Natural killer cell (primary cell): ENCODE measurements at regions of chr2 and their contacts with region 1.

Region 1: GRCh38 chr2:224650815-224651439 is 65.2 kb downstream of the CCDC195 start:
- DNase-seq: peak in 1 of 2 donors; percentile 75
- ATAC-seq: peak; percentile 60 to 71 (median 63)
- H3K4me3 ChIP-seq: no peak overlapping the region
- H3K4me3 Mint-ChIP-seq: no peak overlapping the region
- H3K27ac ChIP-seq: no peak overlapping the region
- H3K27ac Mint-ChIP-seq: no peak overlapping the region
- H3K4me1 ChIP-seq: no peaks in the 10 kb centered on the region
- H3K4me1 Mint-ChIP-seq: no peaks in the 10 kb centered on the region
- H3K27me3 ChIP-seq: no peaks in the 10 kb centered on the region
- H3K27me3 Mint-ChIP-seq: peaks cover 6% of the 10 kb centered on the region in 2 donors
- CTCF ChIP-seq: peak; percentile 77

Region 2: DNA sequence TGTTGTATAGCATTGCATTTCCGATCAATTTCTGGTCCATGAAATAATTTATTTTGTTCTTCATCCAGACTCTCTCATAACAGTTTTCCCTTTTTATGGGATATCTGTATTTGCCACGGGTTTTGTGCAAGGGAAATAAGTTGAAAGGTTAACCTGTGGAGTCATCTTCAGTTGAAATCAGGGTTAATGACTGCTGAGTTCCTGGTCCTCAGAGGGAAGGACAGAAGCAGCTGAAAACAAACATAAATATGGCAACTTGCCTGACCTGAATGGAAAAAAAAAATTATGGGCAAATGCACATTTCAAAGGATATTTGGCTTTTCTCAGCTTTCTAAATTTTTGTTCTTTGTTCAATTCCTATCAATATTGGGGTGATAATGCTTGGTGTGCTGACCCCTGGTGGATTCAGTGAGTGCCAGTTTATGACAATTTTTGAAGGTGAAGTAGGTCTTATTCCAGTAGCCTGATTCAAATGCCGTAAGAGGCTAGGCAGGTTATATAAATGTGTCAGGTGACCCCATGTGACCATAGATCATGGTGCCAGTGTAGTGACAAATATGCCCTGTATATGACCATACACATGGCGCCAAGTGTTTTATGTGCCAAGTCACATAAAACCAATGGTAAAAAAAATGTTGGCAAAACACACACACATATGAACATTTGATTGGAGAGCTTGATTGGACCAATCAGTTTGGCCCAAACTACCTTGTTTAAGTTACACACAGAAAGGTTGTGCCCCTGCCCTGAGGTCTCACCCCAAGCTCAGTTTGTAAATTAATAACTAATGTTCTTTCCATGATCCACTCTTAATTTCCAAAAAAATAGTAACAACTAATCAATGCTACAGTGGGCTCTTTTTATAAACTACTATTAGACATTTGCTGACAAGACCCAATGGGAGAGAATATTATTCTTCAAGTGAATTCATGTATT is 201.4 kb before region 1 on chr2:
- intact Hi-C with region 1: loop called (anchors 1 kb)
- DNase-seq: peak in 1 of 2 donors; percentile 44
- ATAC-seq: peak in 1 of 3 donors; percentile 45
- H3K4me3 ChIP-seq: no peak overlapping the region
- H3K4me3 Mint-ChIP-seq: no peak overlapping the region
- H3K27ac ChIP-seq: no peak overlapping the region
- H3K27ac Mint-ChIP-seq: no peak overlapping the region
- H3K4me1 ChIP-seq: no peaks in the 10 kb centered on the region
- H3K4me1 Mint-ChIP-seq: no peaks in the 10 kb centered on the region
- H3K27me3 ChIP-seq: no peaks in the 10 kb centered on the region
- H3K27me3 Mint-ChIP-seq: peaks cover 11 to 29% of the 10 kb centered on the region in 2 donors
- CTCF ChIP-seq: peak; percentile 44